RWPE1 (cell line): ENCODE measurements at regions of chr21 and their contacts with region 1.

Region 1: GRCh38 chr21:32748529-32748928 is 20.7 kb upstream of the SYNJ1 start:
- DNase-seq: no peak
- H3K27ac ChIP-seq: no peak overlapping the region
- CTCF ChIP-seq: no peak

Region 2: GRCh38 chr21:32336711-32337110 is 411.8 kb before region 1 on chr21:
- CTCF ChIA-PET with region 1: no interaction called
- POLR2A ChIA-PET with region 1: no interaction called
- DNase-seq: peak; percentile 26
- H3K27ac ChIP-seq: peak overlapping the region; percentile 26
- CTCF ChIP-seq: no peak

Region 3: GRCh38 chr21:32764186-32764585 is 15.7 kb after region 1 on chr21:
- CTCF ChIA-PET with region 1: no interaction called
- POLR2A ChIA-PET with region 1: no interaction called
- DNase-seq: no peak
- H3K27ac ChIP-seq: no peak overlapping the region
- CTCF ChIP-seq: no peak

Region 4: GRCh38 chr21:33542640-33543504 is 794.3 kb after region 1 on chr21 and contains the start of gene SON:
- CTCF ChIA-PET with region 1: no interaction called
- POLR2A ChIA-PET with region 1: interaction called, 10 read pairs
- DNase-seq: peak; percentile 97
- H3K27ac ChIP-seq: peak within 1 kb of the TSS; percentile 98
- CTCF ChIP-seq: no peak